Ascending aorta (tissue), 2 donors: ENCODE measurements at regions of chr12 and their contacts with region 1.

Region 1: GRCh38 chr12:46661110-46661845 is 164.5 kb downstream of the SLC38A4 start:
- DNase-seq: no peak
- H3K4me3 ChIP-seq: peak overlapping the region in 1 of 2 donors; percentile 4
- H3K27ac ChIP-seq: peak overlapping the region; percentile 72 to 80
- H3K4me1 ChIP-seq: peaks cover 6 to 35% of the 10 kb centered on the region in 2 donors
- H3K27me3 ChIP-seq: no peaks in the 10 kb centered on the region
- CTCF ChIP-seq: peak; percentile 73 to 88 (median 78)

Region 2: DNA sequence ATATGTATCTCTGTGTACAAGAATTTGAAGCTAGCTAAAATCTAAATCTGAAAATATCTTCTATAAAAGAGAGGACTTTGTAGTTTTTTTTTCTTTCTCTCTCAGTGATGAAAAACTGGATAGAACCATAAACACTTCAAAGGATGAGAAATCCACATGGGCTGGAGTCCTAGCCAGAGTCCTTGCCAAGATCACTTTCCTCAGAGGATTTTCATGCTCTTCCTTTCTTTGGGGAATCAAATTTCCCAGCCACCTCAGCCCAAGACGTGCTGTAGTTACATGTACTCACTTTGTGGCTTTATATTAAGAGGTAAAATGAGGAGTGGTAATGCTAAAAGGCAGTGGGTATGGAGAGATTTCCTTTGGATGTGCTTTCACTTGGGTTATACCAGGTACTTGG is 502.8 kb before region 1 on chr12:
- intact Hi-C with region 1: loop called (anchors 5 kb)
- DNase-seq: no peak
- H3K4me3 ChIP-seq: no peak overlapping the region
- H3K27ac ChIP-seq: peak overlapping the region in 1 of 2 donors; percentile 59
- H3K4me1 ChIP-seq: peaks cover 3 to 19% of the 10 kb centered on the region in 2 donors
- H3K27me3 ChIP-seq: no peaks in the 10 kb centered on the region
- CTCF ChIP-seq: no peak

Region 3: GRCh38 chr12:46268590-46269558 is 392.4 kb before region 1 on chr12 and contains the start of gene SLC38A1:
- intact Hi-C with region 1: loop called (anchors 2 kb)
- DNase-seq: peak; percentile 75 to 91
- H3K4me3 ChIP-seq: peak within 1 kb of the TSS; percentile 65 to 77
- H3K27ac ChIP-seq: peak within 1 kb of the TSS; percentile 78 to 86
- H3K4me1 ChIP-seq: peaks cover 0 to 15% of the 10 kb centered on the region in 2 donors
- H3K27me3 ChIP-seq: no peaks in the 10 kb centered on the region
- CTCF ChIP-seq: no peak
- total RNA-seq, gene SLC38A1: 12.8 TPM

Region 4: DNA sequence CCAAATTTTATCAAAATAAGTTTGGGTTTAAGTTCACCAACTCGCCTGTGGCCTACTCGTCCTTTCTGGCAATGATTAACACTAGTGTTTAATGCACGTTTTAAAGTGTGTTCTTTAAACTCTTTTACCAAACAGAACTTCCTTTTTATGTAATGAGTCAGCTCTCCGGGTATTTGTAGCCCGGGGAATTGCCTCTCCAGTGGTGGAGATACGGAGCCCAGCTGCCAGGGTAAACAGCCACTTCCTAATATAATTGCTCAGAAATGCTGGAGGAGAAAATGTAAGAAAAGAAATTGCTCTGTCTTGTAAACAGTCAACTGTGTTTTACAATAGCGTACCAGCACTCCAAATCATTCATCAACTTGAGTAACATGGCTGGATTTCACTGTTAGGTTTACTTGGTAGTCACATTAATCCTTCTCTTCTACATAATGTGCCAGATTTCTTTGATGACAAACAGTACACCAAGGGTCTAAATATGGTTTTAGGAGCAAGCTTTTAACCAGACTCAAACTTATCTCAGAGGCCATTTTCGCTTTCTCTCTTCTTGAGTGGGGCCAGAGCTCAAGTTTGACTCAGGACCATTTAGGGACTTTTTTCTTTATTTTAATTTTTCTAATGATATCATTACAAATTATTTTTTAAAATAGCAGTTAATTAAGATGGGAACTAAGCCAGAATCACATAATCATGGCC is 187.5 kb before region 1 on chr12:
- intact Hi-C with region 1: loop called (anchors 5 kb)
- DNase-seq: peak; percentile 30 to 92
- H3K4me3 ChIP-seq: peak overlapping the region; percentile 14 to 37
- H3K27ac ChIP-seq: peak overlapping the region; percentile 86 to 93
- H3K4me1 ChIP-seq: peaks cover 4 to 23% of the 10 kb centered on the region in 2 donors
- H3K27me3 ChIP-seq: no peaks in the 10 kb centered on the region
- CTCF ChIP-seq: no peak

Region 5: GRCh38 chr12:46534327-46534840 is 126.9 kb before region 1 on chr12:
- intact Hi-C with region 1: no loop called
- DNase-seq: no peak
- H3K4me3 ChIP-seq: no peak overlapping the region
- H3K27ac ChIP-seq: no peak overlapping the region
- H3K4me1 ChIP-seq: no peaks in the 10 kb centered on the region
- H3K27me3 ChIP-seq: no peaks in the 10 kb centered on the region
- CTCF ChIP-seq: no peak

Region 6: DNA sequence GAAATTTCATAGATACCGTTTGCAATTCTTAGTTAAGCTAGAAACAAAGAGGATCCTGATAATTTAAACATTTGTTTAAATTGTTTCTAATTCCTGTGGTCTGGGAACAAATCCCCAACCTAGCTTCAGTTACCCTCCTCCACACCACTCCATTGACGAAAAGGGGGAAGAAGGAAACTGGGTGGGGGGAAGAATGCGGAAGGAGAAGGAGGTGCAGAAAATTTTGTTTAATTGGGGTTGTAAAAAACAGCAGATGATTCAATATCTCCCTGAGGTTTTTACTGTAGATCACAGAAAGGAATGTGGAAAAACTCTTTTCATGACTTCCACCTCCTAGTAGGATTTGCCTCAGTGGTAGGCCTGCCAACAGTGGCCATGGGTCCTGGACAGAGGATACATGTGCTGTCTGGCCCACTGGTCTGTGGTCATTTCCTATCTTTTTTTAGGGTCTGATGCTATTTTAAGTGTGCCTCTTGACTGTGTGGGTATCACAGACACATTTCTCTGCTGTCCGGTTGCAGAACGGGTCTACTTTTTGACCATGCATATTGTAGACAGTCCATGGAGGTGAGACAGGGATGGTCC is 295.3 kb after region 1 on chr12:
- intact Hi-C with region 1: no loop called
- DNase-seq: no peak
- H3K4me3 ChIP-seq: no peak overlapping the region
- H3K27ac ChIP-seq: no peak overlapping the region
- H3K4me1 ChIP-seq: no peaks in the 10 kb centered on the region
- H3K27me3 ChIP-seq: no peaks in the 10 kb centered on the region
- CTCF ChIP-seq: no peak